Activated CD4-positive, alpha-beta T cell treated with anti-CD3 and anti-CD28 coated beads for 36 hours (primary cell): ENCODE measurements at regions of chr17 and their contacts with region 1.

Region 1: DNA sequence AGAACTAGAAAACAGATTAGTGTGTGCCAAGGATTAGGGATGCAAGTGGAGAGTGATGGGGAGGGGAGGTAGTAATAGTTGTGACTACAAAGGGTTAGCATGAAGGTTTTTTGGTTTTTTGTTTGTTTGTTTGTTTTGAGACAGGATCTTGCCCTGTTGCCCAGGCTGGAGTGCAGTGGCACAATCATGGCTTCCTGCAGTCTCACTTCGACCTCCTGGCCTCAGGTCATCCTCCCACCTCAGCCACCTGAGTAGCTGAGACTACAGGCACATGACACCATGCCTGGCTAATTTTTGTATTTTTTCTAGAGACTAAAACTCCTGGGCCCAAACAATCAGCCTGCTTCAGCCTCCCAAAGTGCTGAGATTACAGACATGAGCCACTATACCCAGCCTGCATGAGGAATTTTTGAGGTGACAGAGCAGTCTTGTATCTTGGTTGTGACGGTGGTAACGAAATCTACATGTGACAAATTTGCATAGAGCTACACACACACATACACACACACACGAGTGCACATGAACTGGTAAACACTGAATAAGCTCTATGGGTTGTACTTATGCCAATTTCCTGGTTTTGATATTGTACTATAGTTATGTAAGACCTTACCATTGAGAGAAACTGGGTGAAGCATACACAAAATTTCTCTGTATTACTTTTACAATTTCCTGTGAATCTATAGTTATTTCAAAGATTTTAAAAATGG is 59.6 kb upstream of the TOM1L1 start:
- DNase-seq: no peak
- ATAC-seq: no peak
- H3K4me3 Mint-ChIP-seq: no peak overlapping the region
- H3K27ac Mint-ChIP-seq: no peak overlapping the region
- H3K4me1 Mint-ChIP-seq: no peaks in the 10 kb centered on the region
- H3K27me3 Mint-ChIP-seq: no peaks in the 10 kb centered on the region

Region 2: GRCh38 chr17:54793271-54793670 is 47.8 kb before region 1 on chr17:
- CTCF ChIA-PET with region 1: no interaction called
- POLR2A ChIA-PET with region 1: interaction called, 9 read pairs
- intact Hi-C with region 1: loop called in 1 of 2 experiments (anchors 5 kb)
- DNase-seq: no peak
- ATAC-seq: no peak
- H3K4me3 Mint-ChIP-seq: no peak overlapping the region
- H3K27ac Mint-ChIP-seq: no peak overlapping the region
- H3K4me1 Mint-ChIP-seq: no peaks in the 10 kb centered on the region
- H3K27me3 Mint-ChIP-seq: no peaks in the 10 kb centered on the region

Region 3: DNA sequence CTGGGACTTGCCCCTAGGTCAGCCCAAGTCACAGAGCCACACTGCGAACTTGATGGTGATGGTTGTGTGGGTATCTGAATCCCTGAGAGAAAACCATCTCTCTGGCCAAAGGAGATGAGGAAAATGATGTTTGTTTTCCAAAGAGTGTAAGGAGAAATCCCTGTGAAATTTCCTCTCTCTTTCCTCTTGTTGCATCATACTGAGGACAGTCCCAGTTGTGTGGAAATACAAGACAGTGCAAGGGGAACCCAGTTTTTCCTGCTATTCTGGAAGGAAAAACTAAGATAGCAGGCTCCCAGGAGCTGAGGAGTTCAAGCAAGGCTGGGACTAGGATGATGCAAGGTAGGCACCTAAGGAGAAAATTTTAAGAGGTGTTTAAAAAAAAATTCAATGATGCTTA is 27.1 kb before region 1 on chr17:
- CTCF ChIA-PET with region 1: no interaction called
- POLR2A ChIA-PET with region 1: no interaction called
- intact Hi-C with region 1: no loop called
- DNase-seq: no peak
- ATAC-seq: no peak
- H3K4me3 Mint-ChIP-seq: no peak overlapping the region
- H3K27ac Mint-ChIP-seq: no peak overlapping the region
- H3K4me1 Mint-ChIP-seq: no peaks in the 10 kb centered on the region
- H3K27me3 Mint-ChIP-seq: no peaks in the 10 kb centered on the region